Activated CD8-positive, alpha-beta memory T cell treated with anti-CD3 and anti-CD28 coated beads, Interleukin-2, amount 10 ng/mL, durations not matched to agents 7 days and 5 days (primary cell): ENCODE measurements at regions of chr14 and their contacts with region 1.

Region 1: DNA sequence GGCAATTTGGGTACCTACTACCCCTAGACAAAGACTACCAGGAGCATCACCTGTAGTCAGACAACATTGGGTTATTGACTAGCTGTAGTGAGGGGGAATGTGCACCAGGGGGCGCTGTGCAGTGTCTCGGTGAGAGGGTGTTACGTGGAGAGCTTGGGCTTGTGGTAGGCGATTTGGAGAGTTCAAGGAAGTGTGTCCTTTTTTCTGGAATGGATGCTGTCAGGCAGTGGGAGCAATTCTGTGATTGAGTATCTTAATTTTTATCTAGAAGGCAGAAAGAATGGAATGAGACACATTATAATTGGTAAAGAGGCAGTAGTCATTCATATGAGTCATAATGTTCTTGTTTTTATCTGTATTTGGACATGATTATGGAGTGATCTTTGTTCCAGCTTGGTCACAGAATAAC is 187.7 kb downstream of the GALC start:
- DNase-seq: peak; percentile 61
- ATAC-seq: peak; percentile 47
- H3K4me3 Mint-ChIP-seq: no peak overlapping the region
- H3K27ac Mint-ChIP-seq: no peak overlapping the region
- H3K4me1 Mint-ChIP-seq: no peaks in the 10 kb centered on the region
- H3K27me3 Mint-ChIP-seq: peaks cover 2% of the 10 kb centered on the region

Region 2: DNA sequence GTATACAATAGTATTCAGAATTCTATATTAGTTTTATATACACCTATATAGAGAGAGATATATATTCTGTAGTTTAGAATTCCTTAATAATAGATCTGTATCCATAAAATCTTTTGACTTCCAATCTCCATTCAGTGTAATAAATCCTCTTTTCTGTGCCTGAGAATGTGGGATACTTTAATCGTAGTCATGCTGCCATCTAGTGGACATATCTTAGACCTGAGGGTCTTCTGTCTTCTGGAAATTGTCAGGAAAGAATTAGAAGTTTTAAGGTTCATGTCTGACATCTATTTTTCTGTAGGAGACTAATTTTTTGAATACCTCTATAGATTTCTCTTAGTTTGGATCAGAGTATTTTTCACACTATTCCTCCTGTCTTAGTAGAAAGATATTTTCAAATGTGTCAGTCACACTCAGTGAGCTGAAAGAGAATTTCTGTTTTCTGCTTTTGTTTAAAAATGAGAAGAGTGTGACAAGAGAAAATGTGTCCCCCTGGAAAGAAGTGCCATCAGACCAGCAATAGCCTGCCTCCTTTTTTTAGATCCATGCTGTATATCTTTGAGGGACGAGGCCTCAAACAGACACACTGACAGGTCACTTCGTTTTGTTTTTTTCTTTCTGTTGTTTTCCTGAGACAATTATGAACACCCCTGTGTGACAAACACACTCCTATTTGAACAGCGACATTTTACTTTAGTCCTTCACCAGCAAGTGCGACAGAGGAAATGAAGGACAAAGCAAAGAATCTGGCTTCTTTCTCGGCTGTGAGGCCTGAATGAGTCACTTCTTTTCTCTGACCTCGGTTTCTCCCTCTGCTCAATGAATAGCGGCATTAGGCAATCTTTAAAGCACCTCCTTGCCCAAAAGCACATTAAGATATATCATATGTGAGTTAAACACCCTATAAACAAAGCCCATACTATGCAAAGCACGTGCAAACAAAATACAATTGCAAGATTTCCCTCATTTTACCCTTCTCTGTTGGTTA is 91.4 kb after region 1 on chr14:
- CTCF ChIA-PET with region 1: interaction called, 10 read pairs
- DNase-seq: no peak
- ATAC-seq: peak; percentile 36
- H3K4me3 Mint-ChIP-seq: no peak overlapping the region
- H3K27ac Mint-ChIP-seq: no peak overlapping the region
- H3K4me1 Mint-ChIP-seq: no peaks in the 10 kb centered on the region
- H3K27me3 Mint-ChIP-seq: peaks cover 35% of the 10 kb centered on the region